AG04449 (cell line): ENCODE measurements at regions of chr10 and their contacts with region 1.

Region 1: DNA sequence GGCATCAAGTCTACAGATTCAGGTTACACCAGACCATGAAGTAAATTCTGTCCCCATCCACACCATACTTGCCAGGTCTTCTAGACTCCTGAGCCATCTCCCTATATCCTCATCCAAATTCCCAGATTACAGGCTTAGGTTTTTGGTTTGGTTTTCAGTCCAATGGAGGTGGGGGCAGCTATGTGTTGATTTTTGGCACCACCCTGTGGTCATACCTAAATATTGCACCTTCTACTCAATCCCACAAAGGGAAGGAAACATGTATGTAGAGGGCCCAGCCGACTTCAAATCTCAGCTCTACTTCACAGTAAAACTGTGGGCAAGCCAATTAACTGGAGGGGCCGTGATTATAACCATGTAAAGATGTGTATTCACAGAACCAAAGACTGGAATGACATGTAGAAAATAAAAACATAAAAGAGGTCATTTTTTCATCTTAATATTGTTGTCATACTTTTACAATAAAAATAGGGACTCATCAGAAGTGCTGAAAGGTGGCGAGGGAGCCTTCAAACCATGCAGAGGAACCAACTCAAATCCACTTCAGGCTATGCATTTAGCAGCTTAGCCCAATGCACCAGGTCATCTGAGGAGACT is 19.8 kb downstream of the ERCC6 start:
- DNase-seq: no peak
- H3K4me3 ChIP-seq: no peak overlapping the region
- CTCF ChIP-seq: peak; percentile 54

Region 2: GRCh38 chr10:49500418-49500817 is 18.7 kb before region 1 on chr10:
- CTCF ChIA-PET with region 1: interaction called, 53 read pairs
- POLR2A ChIA-PET with region 1: no interaction called
- DNase-seq: no peak
- H3K4me3 ChIP-seq: no peak overlapping the region
- CTCF ChIP-seq: no peak

Region 3: DNA sequence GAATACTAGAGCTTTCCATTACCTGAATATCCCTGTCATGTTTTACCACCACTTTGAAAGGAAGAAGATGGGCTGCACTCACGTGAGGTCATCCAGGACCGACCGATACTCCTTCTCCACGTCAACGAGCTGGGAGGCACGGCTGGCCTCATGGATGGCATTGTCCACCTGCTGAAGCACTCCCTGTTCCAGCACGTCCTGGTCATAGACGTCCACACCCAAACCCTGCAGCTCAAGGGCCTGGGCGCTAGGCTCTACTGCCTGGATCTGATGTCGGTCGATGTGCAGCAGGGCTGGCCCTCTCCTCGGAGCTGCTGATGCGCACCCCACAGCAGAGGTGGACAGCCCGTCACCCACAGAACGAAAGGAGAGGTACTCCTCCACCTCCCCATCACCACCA is 13.4 kb after region 1 on chr10:
- CTCF ChIA-PET with region 1: interaction called, 111 read pairs
- POLR2A ChIA-PET with region 1: interaction called, 3 read pairs
- DNase-seq: no peak
- H3K4me3 ChIP-seq: no peak overlapping the region
- CTCF ChIP-seq: no peak

Region 4: DNA sequence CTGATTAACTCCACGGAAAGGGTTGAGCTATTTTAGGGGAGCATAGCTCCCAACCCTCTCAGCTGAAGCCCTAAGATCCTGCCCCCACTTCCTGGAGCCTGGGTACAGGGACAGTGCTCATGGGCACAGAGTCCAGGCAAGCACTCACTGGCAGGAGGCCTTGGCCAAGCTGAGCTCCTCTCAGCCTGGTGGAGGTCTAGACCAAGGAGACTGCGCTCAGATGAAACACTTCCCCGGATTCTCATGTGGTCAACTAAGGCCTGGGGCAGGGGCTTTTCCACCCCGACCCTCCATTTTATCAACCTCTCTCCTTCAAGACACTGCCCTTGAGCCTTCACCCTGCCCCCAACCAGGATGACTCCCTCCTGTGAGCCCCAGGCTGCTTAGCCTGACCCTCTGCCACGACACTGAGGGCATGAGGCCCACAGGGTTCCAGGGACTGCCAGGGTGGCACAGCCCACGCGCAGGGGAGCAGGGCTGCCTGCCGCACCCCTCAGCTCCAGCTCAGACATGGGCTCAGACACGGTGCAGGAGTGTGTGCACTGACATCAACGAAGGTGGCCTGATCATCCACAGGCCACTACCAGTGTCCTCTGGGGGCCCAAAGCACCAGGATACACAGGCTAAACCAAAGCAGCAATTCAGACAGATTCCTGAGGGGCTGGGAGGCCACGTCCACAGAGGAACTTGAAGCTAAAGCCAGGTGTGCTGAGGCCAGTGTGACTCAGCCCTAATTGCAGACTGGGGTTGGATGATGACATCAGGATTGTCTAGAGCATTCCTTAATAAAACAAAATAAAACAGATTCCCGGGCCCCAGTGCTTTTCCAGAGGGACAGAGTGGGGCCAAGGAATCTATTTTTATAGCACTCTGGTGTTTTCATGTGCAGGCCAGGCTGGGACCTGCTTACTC is 113.6 kb after region 1 on chr10:
- CTCF ChIA-PET with region 1: no interaction called
- POLR2A ChIA-PET with region 1: no interaction called
- DNase-seq: no peak
- H3K4me3 ChIP-seq: no peak overlapping the region
- CTCF ChIP-seq: no peak